Mammary epithelial cell (primary cell): ENCODE measurements at regions of chr15 and their contacts with region 1.

Region 1: GRCh38 chr15:41476416-41477048 is 17.1 kb upstream of the ITPKA start:
- DNase-seq: no peak
- H3K4me3 ChIP-seq: no peak overlapping the region
- H3K27ac ChIP-seq: no peak overlapping the region
- H3K4me1 ChIP-seq: no peaks in the 10 kb centered on the region
- H3K27me3 ChIP-seq: no peaks in the 10 kb centered on the region
- CTCF ChIP-seq: no peak

Region 2: GRCh38 chr15:41416742-41417406 is 59.7 kb before region 1 on chr15 and contains the start of gene RTF1:
- CTCF ChIA-PET with region 1: no interaction called
- dilution Hi-C with region 1: loop called (anchors 10 kb)
- in situ Hi-C with region 1: no loop called
- intact Hi-C with region 1: no loop called
- DNase-seq: peak; percentile 85
- H3K4me3 ChIP-seq: peak within 1 kb of the TSS; percentile 68 to 94 (median 75)
- H3K27ac ChIP-seq: peak within 1 kb of the TSS; percentile 57
- H3K4me1 ChIP-seq: peaks cover 6% of the 10 kb centered on the region
- H3K27me3 ChIP-seq: no peaks in the 10 kb centered on the region
- CTCF ChIP-seq: no peak
- total RNA-seq, gene RTF1: 26.7 to 33.0 TPM

Region 3: DNA sequence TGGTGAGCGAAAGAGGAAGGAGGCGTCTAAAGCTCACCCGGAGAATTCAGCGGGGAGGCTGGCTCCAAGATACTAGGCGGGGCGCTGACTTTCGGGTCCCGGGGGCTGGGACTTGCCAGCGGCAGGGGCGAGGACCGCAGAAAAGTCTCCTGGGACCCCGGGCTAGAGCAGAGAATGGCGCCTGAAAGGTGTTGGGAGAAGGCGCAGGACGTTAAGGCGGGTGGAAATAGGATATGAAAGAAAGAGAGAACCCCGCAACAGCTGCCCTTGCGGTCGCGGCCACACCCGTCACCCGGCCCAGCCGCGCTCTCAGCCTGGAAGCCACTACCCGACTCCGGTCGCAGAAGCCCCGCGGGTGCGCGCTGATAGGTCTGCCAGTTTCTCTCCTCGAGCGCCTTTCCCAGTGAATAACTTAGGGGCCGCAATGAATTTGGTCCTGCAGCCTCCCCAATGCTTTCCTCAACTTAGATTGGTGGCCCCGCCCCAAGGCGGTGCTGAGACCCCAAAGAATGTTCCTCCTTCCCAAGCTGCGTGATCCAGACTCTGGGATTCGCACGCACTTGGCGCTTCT is 36.5 kb after region 1 on chr15:
- CTCF ChIA-PET with region 1: no interaction called
- dilution Hi-C with region 1: no loop called
- in situ Hi-C with region 1: no loop called
- intact Hi-C with region 1: no loop called
- DNase-seq: no peak
- H3K4me3 ChIP-seq: peak overlapping the region in 1 of 3 experiments; percentile 3
- H3K27ac ChIP-seq: no peak overlapping the region
- H3K4me1 ChIP-seq: peaks cover 19% of the 10 kb centered on the region
- H3K27me3 ChIP-seq: peaks cover 30% of the 10 kb centered on the region
- CTCF ChIP-seq: no peak